Transverse colon (tissue), 4 donors: ENCODE measurements at regions of chr18 and their contacts with region 1.

Region 1: DNA sequence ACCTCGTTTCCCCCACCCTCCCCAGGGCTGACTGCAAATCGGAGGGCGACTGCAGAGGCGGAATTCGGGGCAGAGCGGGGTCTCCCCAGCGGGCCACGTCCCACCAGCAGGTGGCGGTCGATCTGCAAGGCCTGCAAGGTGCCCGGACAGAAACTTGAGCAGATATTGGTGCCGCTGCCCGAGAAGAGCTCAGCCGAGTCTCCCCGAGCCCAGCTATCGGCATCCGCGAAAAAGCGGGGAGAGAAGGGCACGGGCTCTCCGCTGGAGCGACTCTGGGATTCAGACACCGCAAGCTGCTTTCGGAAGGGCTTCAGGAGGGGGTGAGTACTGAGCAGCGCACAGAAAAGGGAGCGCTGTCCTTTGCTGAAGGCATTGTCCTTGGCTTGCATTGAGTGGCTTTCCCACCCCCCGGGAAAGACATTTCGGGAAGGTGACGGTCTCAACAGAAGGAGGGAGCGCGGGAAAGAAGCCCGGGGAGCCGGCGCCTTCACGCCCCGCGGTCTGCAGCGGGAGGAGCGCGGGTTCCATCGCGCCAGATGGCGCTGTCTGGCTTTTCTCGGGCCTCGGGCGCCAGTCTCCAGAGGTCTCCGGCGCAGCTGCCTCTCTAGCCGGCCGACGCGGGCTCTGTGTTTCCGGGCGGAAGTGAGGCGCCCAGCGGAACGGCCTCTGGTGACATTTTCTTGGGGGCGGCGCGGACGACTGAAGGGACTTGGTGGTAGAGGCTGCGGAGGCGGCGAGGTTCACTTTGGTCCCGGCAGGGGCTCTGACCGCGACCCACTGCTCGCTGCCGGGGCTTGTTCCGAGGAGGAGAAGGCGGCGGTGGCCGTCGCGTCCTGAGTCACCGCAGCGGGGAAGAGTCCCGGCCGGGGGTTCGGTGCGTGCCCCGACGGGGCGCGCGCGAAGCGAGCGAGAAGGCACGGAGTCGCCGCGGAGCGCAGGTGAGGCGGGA is 69.5 kb downstream of the HAUS1 start:
- DNase-seq: peak; percentile 93
- H3K4me3 ChIP-seq: peak overlapping the region; percentile 76 to 97 (median 86)
- H3K27ac ChIP-seq: peak overlapping the region; percentile 88 to 93 (median 90)
- H3K4me1 ChIP-seq: peaks cover 8 to 29% (median 22%) of the 10 kb centered on the region in 4 donors
- H3K27me3 ChIP-seq: no peaks in the 10 kb centered on the region
- CTCF ChIP-seq: peak; percentile 85 to 90 (median 87)
- EP300 ChIP-seq: no peak
- POLR2A ChIP-seq: peak; percentile 72

Region 2: DNA sequence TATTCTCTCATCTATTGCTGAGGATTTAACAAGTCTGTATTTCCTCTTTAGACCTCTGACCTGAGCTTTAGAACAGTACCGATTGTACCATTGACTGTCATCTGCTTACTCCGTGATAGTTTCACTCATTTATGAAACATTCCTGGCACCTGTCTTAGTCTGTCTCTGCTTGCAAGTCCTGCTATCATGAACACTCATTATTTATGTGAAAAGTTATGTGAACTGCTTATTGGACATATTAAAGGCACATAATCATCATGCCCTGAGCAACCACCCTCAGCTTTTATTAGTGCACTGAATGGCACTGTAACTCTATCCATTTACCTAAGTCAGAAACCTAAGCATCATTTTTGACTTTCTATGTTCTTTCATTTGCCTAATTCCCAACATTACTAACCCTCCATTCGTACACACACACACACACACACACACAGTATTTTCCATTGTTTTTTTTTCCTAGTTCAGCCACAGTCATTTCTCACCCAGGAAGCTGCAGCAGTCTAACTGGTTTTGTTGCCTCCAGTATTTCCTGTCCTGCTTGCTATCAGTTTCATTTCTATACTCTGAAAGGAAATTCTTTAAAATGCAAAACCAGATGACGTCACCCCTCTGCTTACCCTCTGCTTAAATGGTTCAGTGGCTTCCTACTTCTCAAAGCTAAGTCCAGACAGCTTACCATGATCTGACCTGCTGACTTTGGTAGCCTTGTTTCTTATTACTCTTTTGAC is 76.6 kb after region 1 on chr18:
- in situ Hi-C with region 1: no loop called
- intact Hi-C with region 1: loop called (anchors 10 kb)
- DNase-seq: peak; percentile 61
- H3K4me3 ChIP-seq: peak overlapping the region in 1 of 4 donors; percentile 30
- H3K27ac ChIP-seq: peak overlapping the region; percentile 78 to 85 (median 82)
- H3K4me1 ChIP-seq: peaks cover 15 to 36% (median 25%) of the 10 kb centered on the region in 4 donors
- H3K27me3 ChIP-seq: no peaks in the 10 kb centered on the region
- CTCF ChIP-seq: no peak
- EP300 ChIP-seq: no peak
- POLR2A ChIP-seq: no peak

Region 3: DNA sequence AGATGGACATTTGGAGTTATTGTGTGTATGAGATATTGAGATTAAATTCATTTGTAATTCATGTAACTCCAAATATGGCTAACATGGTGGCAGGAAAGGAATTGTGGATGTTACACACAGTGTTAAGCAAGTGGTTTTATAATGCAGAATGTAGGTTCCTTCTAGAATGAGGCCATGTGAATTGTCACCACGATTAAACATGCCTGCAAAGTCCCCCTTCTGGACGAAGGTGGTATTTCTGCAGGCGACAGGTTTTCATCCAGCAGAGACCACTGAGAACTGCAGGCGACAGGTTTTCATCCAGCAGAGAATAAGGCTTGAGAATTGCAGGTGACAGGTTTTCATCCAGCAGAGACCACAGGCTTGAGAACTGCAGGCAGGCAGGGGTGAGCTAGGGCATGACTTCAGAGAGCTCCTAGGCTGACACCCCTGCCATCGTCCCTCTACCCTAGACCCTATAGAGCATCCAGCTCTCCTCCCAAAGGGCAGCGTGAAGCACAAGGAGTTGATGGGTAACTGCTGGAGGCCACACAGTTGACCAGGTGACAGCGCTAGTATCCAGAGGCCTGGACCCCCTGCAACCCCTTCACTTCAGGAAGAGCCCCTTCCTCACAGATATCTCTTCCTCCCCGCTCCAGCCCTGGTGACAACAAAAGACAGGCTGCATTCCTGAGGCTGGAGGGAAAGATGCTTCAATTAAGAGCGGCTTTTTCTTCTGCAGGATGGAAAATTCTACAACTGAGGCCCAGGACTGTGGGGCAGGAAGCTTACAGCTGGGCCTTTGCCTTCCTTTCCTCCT is 307.6 kb after region 1 on chr18:
- in situ Hi-C with region 1: loop called in 3 of 4 experiments (anchors 25 kb)
- intact Hi-C with region 1: no loop called
- DNase-seq: peak; percentile 44
- H3K4me3 ChIP-seq: no peak overlapping the region
- H3K27ac ChIP-seq: no peak overlapping the region
- H3K4me1 ChIP-seq: no peaks in the 10 kb centered on the region
- H3K27me3 ChIP-seq: no peaks in the 10 kb centered on the region
- CTCF ChIP-seq: peak; percentile 71 to 77 (median 75)
- EP300 ChIP-seq: no peak
- POLR2A ChIP-seq: no peak